CD14-positive monocyte (primary cell): ENCODE measurements at regions of chr11 and their contacts with region 1.

Region 1: GRCh38 chr11:119101759-119102423 is at the start of gene DPAGT1:
- DNase-seq: peak; percentile 82 to 86 (median 85)
- H3K4me3 ChIP-seq: peak within 1 kb of the TSS; percentile 80 to 91 (median 87)
- H3K4me3 Mint-ChIP-seq: peak within 1 kb of the TSS; percentile 90 to 98
- H3K27ac ChIP-seq: peak within 1 kb of the TSS; percentile 76 to 91
- H3K27ac Mint-ChIP-seq: peak within 1 kb of the TSS; percentile 96 to 99 (median 99)
- H3K4me1 ChIP-seq: peaks cover 44 to 56% of the 10 kb centered on the region in 2 donors
- H3K4me1 Mint-ChIP-seq: peaks cover 52% of the 10 kb centered on the region
- H3K27me3 ChIP-seq: no peaks in the 10 kb centered on the region
- H3K27me3 Mint-ChIP-seq: no peaks in the 10 kb centered on the region
- CTCF ChIP-seq: no peak
- polyA plus RNA-seq, gene DPAGT1: 37.0 to 54.2 (median 39.7) TPM

Region 2: DNA sequence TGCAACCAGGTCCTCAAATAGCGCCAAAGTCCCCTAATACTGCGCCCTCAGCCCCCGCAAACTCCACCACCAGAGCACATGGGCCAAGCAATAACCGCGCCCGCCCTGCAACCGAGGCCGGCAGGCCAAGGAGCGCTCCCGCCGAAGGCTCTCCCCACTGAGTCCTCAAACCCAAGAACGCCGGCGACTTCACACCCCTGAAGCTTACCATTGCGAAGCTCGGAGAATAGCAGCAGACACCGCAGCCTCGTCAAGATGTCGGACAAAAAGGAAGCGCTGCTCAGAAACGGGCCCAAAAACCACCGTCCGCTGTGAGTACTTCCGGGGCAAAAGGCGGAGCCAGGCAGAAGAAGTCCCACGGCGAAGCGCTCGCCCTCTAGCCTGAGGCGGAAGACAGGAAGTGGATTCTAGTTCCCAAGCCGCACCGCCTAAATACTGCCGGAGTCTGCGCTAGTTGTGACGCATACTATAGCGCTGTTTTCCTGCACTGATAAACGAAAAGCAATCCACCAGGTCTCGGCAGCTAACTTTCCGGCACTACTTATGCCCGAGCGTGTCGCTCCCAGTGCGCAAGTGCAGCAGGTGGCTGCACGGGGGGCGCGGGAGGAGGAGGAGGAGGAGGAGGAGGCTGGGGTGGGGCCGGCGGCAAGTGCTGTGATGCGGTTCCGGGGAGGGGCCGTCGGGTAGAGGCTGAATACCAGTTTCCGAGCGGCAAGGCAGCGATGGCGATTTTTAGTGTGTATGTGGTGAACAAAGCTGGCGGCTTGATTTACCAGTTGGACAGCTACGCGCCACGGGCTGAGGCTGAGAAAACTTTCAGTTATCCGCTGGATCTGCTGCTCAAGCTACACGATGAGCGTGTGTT is 83.6 kb before region 1 on chr11 and contains the starts of genes RPS25 and TRAPPC4:
- intact Hi-C with region 1: loop called in 1 of 2 experiments (anchors 5 kb)
- DNase-seq: peak; percentile 96 to 97 (median 96)
- H3K4me3 ChIP-seq: peak within 1 kb of the TSS; percentile 87 to 88 (median 88)
- H3K4me3 Mint-ChIP-seq: peak within 1 kb of the TSS; percentile 96 to 97
- H3K27ac ChIP-seq: peak within 1 kb of the TSS; percentile 93 to 96
- H3K27ac Mint-ChIP-seq: peak within 1 kb of the TSS; percentile 98 to 100 (median 99)
- H3K4me1 ChIP-seq: peaks cover 26 to 34% of the 10 kb centered on the region in 2 donors
- H3K4me1 Mint-ChIP-seq: peaks cover 24% of the 10 kb centered on the region
- H3K27me3 ChIP-seq: no peaks in the 10 kb centered on the region
- H3K27me3 Mint-ChIP-seq: peaks cover 0 to 1% (median 0%) of the 10 kb centered on the region in 3 donors
- CTCF ChIP-seq: no peak
- polyA plus RNA-seq, gene RPS25: 1,137 to 1,336 (median 1,264) TPM
- polyA plus RNA-seq, gene TRAPPC4: 46.9 to 54.5 (median 50.0) TPM

Region 3: GRCh38 chr11:119067371-119068222 is 34.3 kb before region 1 on chr11 and contains the start of gene VPS11:
- intact Hi-C with region 1: loop called (anchors 5 kb)
- DNase-seq: peak; percentile 95 to 97 (median 96)
- H3K4me3 ChIP-seq: peak within 1 kb of the TSS; percentile 77 to 93 (median 89)
- H3K4me3 Mint-ChIP-seq: peak within 1 kb of the TSS; percentile 94 to 97
- H3K27ac ChIP-seq: peak within 1 kb of the TSS; percentile 91 to 96
- H3K27ac Mint-ChIP-seq: peak within 1 kb of the TSS; percentile 97 to 99 (median 98)
- H3K4me1 ChIP-seq: peaks cover 29 to 37% of the 10 kb centered on the region in 2 donors
- H3K4me1 Mint-ChIP-seq: peaks cover 33% of the 10 kb centered on the region
- H3K27me3 ChIP-seq: no peaks in the 10 kb centered on the region
- H3K27me3 Mint-ChIP-seq: peaks cover 0 to 3% (median 0%) of the 10 kb centered on the region in 3 donors
- CTCF ChIP-seq: no peak
- polyA plus RNA-seq, gene VPS11: 28.6 to 56.6 (median 43.3) TPM

Region 4: GRCh38 chr11:119084663-119085436 is 17.0 kb before region 1 on chr11 and contains the start of gene HMBS:
- intact Hi-C with region 1: loop called in 1 of 2 experiments (anchors 2 kb)
- DNase-seq: peak; percentile 87 to 97 (median 96)
- H3K4me3 ChIP-seq: peak within 1 kb of the TSS; percentile 50 to 96 (median 77)
- H3K4me3 Mint-ChIP-seq: peak within 1 kb of the TSS; percentile 92 to 98
- H3K27ac ChIP-seq: peak within 1 kb of the TSS; percentile 83 to 90
- H3K27ac Mint-ChIP-seq: peak within 1 kb of the TSS; percentile 89 to 97 (median 95)
- H3K4me1 ChIP-seq: peaks cover 25 to 32% of the 10 kb centered on the region in 2 donors
- H3K4me1 Mint-ChIP-seq: peaks cover 39% of the 10 kb centered on the region
- H3K27me3 ChIP-seq: no peaks in the 10 kb centered on the region
- H3K27me3 Mint-ChIP-seq: peaks cover 0 to 1% (median 1%) of the 10 kb centered on the region in 3 donors
- CTCF ChIP-seq: no peak
- polyA plus RNA-seq, gene HMBS: 21.1 to 26.4 (median 25.2) TPM

Region 5: GRCh38 chr11:119121008-119121810 is 19.3 kb after region 1 on chr11 and contains the start of gene HINFP:
- intact Hi-C with region 1: loop called in 1 of 2 experiments (anchors 2 kb)
- DNase-seq: peak; percentile 98 to 99 (median 98)
- H3K4me3 ChIP-seq: peak within 1 kb of the TSS; percentile 62 to 97 (median 97)
- H3K4me3 Mint-ChIP-seq: peak within 1 kb of the TSS; percentile 90 to 93
- H3K27ac ChIP-seq: peak within 1 kb of the TSS; percentile 40 to 81
- H3K27ac Mint-ChIP-seq: peak within 1 kb of the TSS; percentile 83 to 94 (median 90)
- H3K4me1 ChIP-seq: peaks cover 32 to 39% of the 10 kb centered on the region in 2 donors
- H3K4me1 Mint-ChIP-seq: peaks cover 34% of the 10 kb centered on the region
- H3K27me3 ChIP-seq: no peaks in the 10 kb centered on the region
- H3K27me3 Mint-ChIP-seq: peaks cover 0 to 5% (median 0%) of the 10 kb centered on the region in 3 donors
- CTCF ChIP-seq: no peak
- polyA plus RNA-seq, gene HINFP: 8.0 to 43.0 (median 8.6) TPM

Region 6: DNA sequence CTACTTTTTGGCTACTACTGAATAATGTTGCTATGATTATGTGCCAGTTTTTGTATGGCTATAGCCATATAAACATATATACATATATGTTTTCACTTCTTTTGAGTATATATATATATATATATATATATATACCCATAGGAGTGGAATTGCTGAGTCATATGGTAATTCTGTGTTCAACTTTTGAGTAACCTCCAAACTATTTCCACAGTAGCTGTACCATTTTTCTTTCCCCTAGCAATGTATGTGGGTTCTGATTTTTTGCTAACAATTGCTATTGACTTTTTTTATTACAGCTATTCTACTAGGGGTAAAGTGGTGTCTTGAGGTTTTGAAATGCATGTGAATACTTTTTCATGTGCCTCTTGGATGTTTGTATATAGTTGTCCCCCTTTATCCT is 134.6 kb after region 1 on chr11:
- intact Hi-C with region 1: no loop called
- DNase-seq: no peak
- H3K4me3 ChIP-seq: no peak overlapping the region
- H3K4me3 Mint-ChIP-seq: no peak overlapping the region
- H3K27ac ChIP-seq: peak overlapping the region in 1 of 2 donors; percentile 58
- H3K27ac Mint-ChIP-seq: peak overlapping the region in 1 of 7 donors; percentile 34
- H3K4me1 ChIP-seq: peaks cover 13 to 16% of the 10 kb centered on the region in 2 donors
- H3K4me1 Mint-ChIP-seq: peaks cover 24% of the 10 kb centered on the region
- H3K27me3 ChIP-seq: no peaks in the 10 kb centered on the region
- H3K27me3 Mint-ChIP-seq: no peaks in the 10 kb centered on the region
- CTCF ChIP-seq: no peak